ENCODE measurements at regions of chr12 and their contacts with region 1.

Region 1: DNA sequence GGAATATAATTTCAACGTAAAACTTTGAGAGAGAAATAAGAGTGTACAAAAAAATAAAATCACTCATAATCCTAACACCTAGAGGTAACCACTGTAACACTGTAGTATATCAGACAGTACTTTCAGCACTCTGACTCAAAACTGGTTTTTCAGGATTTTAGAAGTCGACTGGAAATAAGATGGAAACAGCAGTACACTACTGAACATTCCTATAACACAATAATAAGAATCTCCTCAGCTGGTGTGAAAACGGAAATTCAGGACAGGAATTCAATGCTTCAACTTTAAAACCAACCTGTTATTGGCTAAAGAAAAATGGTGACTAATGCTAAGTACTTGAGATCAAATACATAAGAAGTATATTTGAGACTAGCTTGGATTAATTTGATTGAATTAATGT is 12.3 kb upstream of the PITPNM2 start:
- DNase-seq: no peak
- H3K4me3 ChIP-seq: no peak overlapping the region
- H3K4me3 Mint-ChIP-seq: no peak overlapping the region
- H3K27ac Mint-ChIP-seq: no peak overlapping the region
- H3K4me1 ChIP-seq: peaks cover 7% of the 10 kb centered on the region; the same call in 1 of the 2 replicates
- H3K4me1 Mint-ChIP-seq: peaks cover 5% of the 10 kb centered on the region
- H3K27me3 ChIP-seq: no peaks in the 10 kb centered on the region
- H3K27me3 Mint-ChIP-seq: no peaks in the 10 kb centered on the region
- CTCF ChIP-seq: no peak

Region 2: DNA sequence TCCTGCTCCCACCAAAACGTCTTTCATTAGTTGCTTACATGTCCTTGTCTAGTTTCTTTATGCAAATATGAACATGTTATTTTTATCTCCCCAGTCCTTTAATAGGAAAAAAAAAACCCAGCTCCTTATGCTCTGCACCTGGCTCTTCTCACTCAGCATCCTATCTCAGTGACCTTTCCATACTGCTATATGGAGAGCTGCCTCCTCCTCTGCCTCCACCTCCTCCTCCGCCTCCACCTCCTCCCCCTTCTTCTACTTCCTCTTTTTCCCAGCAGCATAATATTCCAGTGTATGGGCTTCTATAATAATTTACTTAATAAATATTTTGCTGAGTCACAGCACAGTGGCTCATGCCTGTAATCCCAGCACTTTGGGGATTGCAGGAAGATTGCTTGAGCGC is 228.5 kb before region 1 on chr12:
- CTCF ChIA-PET with region 1: no interaction called
- POLR2A ChIA-PET with region 1: no interaction called
- intact Hi-C with region 1: no loop called
- DNase-seq: no peak
- H3K4me3 ChIP-seq: no peak overlapping the region
- H3K4me3 Mint-ChIP-seq: no peak overlapping the region
- H3K27ac Mint-ChIP-seq: no peak overlapping the region
- H3K4me1 ChIP-seq: no peaks in the 10 kb centered on the region
- H3K4me1 Mint-ChIP-seq: no peaks in the 10 kb centered on the region
- H3K27me3 ChIP-seq: no peaks in the 10 kb centered on the region
- H3K27me3 Mint-ChIP-seq: no peaks in the 10 kb centered on the region
- CTCF ChIP-seq: no peak

Region 3: DNA sequence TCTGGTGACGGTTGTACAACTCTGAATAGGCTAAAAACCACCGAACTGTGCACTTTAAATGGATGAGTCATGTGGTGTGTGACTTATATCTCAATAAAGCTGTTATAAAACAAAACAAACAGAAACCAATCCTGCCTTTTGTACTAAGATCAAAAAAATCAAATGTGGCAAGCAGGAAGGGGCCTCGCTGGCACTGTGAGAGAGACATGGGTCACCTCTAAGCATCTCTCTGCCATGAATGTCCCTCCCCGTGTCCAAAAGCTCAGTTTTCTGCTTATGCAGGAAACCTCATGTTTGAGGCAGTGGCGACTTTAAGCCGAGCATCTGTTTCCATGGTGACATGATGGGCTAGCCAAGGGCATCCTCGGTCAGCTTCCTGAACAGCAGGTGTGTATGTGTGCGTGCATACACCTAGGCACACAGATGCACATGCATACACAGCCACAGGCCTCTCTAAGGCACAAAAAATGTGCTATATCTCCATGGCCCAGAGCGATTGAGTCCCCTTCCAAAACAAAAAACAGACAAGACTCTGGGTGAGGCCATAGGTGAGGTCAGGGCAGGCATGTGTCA is 138.3 kb before region 1 on chr12:
- CTCF ChIA-PET with region 1: no interaction called
- POLR2A ChIA-PET with region 1: interaction called, 10 read pairs
- intact Hi-C with region 1: no loop called
- DNase-seq: no peak
- H3K4me3 ChIP-seq: no peak overlapping the region
- H3K4me3 Mint-ChIP-seq: no peak overlapping the region
- H3K27ac Mint-ChIP-seq: no peak overlapping the region
- H3K4me1 ChIP-seq: peaks cover 6% of the 10 kb centered on the region; the same call in 1 of the 2 replicates
- H3K4me1 Mint-ChIP-seq: no peaks in the 10 kb centered on the region
- H3K27me3 ChIP-seq: no peaks in the 10 kb centered on the region
- H3K27me3 Mint-ChIP-seq: no peaks in the 10 kb centered on the region
- CTCF ChIP-seq: no peak

Region 4: GRCh38 chr12:123223241-123223668 is 60.0 kb after region 1 on chr12:
- CTCF ChIA-PET with region 1: no interaction called
- POLR2A ChIA-PET with region 1: no interaction called
- intact Hi-C with region 1: loop called (anchors 5 kb)
- DNase-seq: no peak
- H3K4me3 ChIP-seq: no peak overlapping the region
- H3K4me3 Mint-ChIP-seq: no peak overlapping the region
- H3K27ac Mint-ChIP-seq: no peak overlapping the region
- H3K4me1 ChIP-seq: no peaks in the 10 kb centered on the region
- H3K4me1 Mint-ChIP-seq: no peaks in the 10 kb centered on the region
- H3K27me3 ChIP-seq: no peaks in the 10 kb centered on the region
- H3K27me3 Mint-ChIP-seq: no peaks in the 10 kb centered on the region
- CTCF ChIP-seq: no peak

Measured in Caco-2 (cell line).